CD14-positive monocyte (primary cell): ENCODE measurements at regions of chr6 and their contacts with region 1.

Region 1: GRCh38 chr6:57013521-57013926 is 33.0 kb upstream of the KIAA1586 start:
- DNase-seq: no peak
- H3K4me3 ChIP-seq: no peak overlapping the region
- H3K4me3 Mint-ChIP-seq: no peak overlapping the region
- H3K27ac ChIP-seq: no peak overlapping the region
- H3K27ac Mint-ChIP-seq: no peak overlapping the region
- H3K4me1 ChIP-seq: no peaks in the 10 kb centered on the region
- H3K4me1 Mint-ChIP-seq: no peaks in the 10 kb centered on the region
- H3K27me3 ChIP-seq: no peaks in the 10 kb centered on the region
- H3K27me3 Mint-ChIP-seq: no peaks in the 10 kb centered on the region
- CTCF ChIP-seq: no peak

Region 2: DNA sequence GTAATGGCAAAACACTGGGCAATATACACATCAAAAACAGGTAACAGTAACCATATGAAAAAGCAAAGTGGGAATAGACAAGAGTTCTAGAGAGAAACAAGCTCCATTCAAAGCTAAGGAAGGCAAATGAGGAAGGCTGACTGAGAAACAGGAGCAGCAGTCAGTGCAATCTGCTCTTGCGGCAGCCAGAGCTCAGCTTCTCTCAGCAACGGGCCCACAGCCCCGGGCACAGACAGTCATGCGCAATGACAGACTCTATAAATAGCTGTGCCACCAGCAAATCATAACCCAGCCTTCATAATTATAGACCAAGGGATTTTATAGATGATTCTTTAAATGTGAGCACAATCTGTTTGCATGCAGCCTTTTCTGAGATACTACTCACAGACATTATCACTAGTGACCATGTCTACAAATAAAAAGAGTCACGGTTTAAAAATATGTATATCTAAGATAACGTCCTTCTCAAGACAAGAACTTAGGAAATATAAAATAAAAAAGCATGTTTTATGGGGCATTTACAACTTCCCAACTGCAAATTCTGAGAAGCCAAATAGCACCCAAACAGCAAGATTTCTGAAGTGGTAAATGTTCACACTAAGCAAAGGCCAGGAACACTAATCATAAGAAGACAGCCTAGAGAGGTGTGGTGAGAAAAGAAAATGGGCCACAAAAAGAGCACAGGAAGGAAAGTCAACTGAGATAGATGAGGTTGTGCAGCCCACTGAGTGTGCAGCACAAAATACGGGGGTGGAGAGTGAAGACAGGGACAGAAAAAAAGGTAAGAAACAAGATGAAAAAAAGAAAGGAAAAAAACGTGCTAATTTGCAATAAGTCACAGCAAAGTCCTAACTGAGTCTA is 98.5 kb before region 1 on chr6:
- intact Hi-C with region 1: loop called in 1 of 2 experiments (anchors 10 kb)
- DNase-seq: no peak
- H3K4me3 ChIP-seq: no peak overlapping the region
- H3K4me3 Mint-ChIP-seq: no peak overlapping the region
- H3K27ac ChIP-seq: no peak overlapping the region
- H3K27ac Mint-ChIP-seq: no peak overlapping the region
- H3K4me1 ChIP-seq: no peaks in the 10 kb centered on the region
- H3K4me1 Mint-ChIP-seq: no peaks in the 10 kb centered on the region
- H3K27me3 ChIP-seq: no peaks in the 10 kb centered on the region
- H3K27me3 Mint-ChIP-seq: peaks cover 0 to 3% (median 0%) of the 10 kb centered on the region in 3 donors
- CTCF ChIP-seq: no peak